ENCODE measurements at regions of chr5 and their contacts with region 1.

Region 1: DNA sequence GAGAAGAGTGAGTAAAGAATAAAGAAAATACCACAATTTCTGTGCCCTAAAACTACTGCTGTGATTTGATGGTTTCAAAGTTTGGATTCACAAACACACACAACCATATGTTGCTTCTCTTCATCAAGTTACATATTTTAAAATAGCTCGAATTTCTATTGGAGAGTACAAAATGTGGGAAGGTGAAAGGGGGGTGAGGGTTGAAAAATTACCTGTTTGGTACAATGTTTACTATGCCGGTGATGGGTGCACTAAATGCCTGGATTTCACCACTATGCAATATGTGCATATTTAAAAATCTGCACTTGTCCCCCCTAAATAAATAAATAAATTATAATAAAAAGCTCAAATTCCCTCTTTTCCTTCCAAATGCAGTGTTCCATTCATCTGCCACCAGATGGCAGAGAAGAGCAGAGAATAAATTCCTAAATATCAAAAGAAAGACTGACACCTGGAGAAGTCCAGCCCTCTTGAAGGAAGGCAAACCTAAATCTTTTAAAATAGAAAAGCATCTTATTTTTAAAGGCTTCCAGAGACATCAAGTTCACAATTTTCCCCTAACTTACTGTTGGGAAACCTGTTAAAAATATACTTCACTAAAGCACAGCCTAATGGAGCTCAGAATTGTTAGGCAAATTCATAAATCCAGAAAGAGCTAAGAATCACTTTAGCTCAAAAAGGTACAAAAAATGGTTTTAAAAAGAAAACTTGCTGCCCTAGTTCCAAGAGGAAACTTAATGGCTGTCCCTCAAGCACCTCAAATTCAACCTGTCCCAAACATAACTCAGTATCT is 24.8 kb upstream of the HNRNPA0 start:
- DNase-seq: no peak
- H3K4me3 ChIP-seq: no peak overlapping the region
- H3K27ac ChIP-seq: no peak overlapping the region
- H3K4me1 ChIP-seq: no peaks in the 10 kb centered on the region
- H3K27me3 ChIP-seq: no peaks in the 10 kb centered on the region
- CTCF ChIP-seq: peak; percentile 67

Region 2: GRCh38 chr5:137822158-137822764 is 43.3 kb after region 1 on chr5:
- intact Hi-C with region 1: loop called (anchors 2 kb)
- DNase-seq: peak; percentile 38
- H3K4me3 ChIP-seq: no peak overlapping the region
- H3K27ac ChIP-seq: no peak overlapping the region
- H3K4me1 ChIP-seq: no peaks in the 10 kb centered on the region
- H3K27me3 ChIP-seq: no peaks in the 10 kb centered on the region
- CTCF ChIP-seq: peak; percentile 27

Region 3: GRCh38 chr5:137997726-137998213 is 218.8 kb after region 1 on chr5:
- intact Hi-C with region 1: no loop called
- DNase-seq: no peak
- H3K4me3 ChIP-seq: no peak overlapping the region
- H3K27ac ChIP-seq: no peak overlapping the region
- H3K4me1 ChIP-seq: no peaks in the 10 kb centered on the region
- H3K27me3 ChIP-seq: no peaks in the 10 kb centered on the region
- CTCF ChIP-seq: no peak

Region 4: GRCh38 chr5:138159666-138160065 is 380.7 kb after region 1 on chr5:
- intact Hi-C with region 1: loop called (anchors 10 kb)
- DNase-seq: no peak
- H3K4me3 ChIP-seq: no peak overlapping the region
- H3K27ac ChIP-seq: no peak overlapping the region
- H3K4me1 ChIP-seq: no peaks in the 10 kb centered on the region
- H3K27me3 ChIP-seq: no peaks in the 10 kb centered on the region
- CTCF ChIP-seq: no peak